ENCODE measurements at regions of chr2 and their contacts with region 1.

Region 1: GRCh38 chr2:235746257-235747084 is 252.6 kb downstream of the AGAP1 start:
- DNase-seq: peak; percentile 79
- H3K4me3 ChIP-seq: no peak overlapping the region
- H3K27ac ChIP-seq: peak overlapping the region; percentile 21
- H3K27me3 ChIP-seq: no peaks in the 10 kb centered on the region
- CTCF ChIP-seq: peak; percentile 87

Region 2: DNA sequence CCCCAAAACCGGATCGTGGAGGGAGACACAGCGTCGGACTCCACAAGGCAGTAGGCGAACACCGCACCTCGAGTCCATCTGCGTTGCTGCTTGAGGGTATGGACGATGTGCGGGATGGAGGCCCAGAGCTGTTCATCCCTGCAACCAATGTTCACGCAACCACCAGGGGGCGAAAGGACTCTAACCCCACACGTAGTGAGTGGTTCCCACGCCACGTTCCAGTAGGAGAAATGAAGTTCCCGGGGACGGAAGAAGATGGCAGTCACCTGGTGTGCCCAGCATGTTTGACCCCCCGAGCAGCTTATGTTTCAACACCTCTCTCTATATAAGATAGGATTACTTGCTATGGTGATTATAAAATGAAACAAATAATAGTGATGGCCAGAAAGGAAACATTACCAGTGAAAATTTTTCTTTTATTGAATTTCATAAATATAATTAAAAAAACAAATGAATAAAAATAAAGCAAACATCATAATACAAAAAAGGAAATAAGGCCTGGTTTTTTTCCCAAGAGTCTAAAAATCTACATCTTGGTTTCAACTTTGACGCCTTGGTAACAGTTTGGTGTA is 610.4 kb before region 1 on chr2:
- CTCF ChIA-PET with region 1: interaction called, 44 read pairs
- POLR2A ChIA-PET with region 1: no interaction called
- DNase-seq: peak; percentile 47
- H3K4me3 ChIP-seq: no peak overlapping the region
- H3K27ac ChIP-seq: no peak overlapping the region
- H3K27me3 ChIP-seq: peaks cover 27% of the 10 kb centered on the region
- CTCF ChIP-seq: peak; percentile 86

Region 3: GRCh38 chr2:235293061-235293460 is 453.4 kb before region 1 on chr2:
- CTCF ChIA-PET with region 1: no interaction called
- POLR2A ChIA-PET with region 1: no interaction called
- DNase-seq: no peak
- H3K4me3 ChIP-seq: no peak overlapping the region
- H3K27ac ChIP-seq: no peak overlapping the region
- H3K27me3 ChIP-seq: peaks cover 19% of the 10 kb centered on the region
- CTCF ChIP-seq: no peak

Region 4: DNA sequence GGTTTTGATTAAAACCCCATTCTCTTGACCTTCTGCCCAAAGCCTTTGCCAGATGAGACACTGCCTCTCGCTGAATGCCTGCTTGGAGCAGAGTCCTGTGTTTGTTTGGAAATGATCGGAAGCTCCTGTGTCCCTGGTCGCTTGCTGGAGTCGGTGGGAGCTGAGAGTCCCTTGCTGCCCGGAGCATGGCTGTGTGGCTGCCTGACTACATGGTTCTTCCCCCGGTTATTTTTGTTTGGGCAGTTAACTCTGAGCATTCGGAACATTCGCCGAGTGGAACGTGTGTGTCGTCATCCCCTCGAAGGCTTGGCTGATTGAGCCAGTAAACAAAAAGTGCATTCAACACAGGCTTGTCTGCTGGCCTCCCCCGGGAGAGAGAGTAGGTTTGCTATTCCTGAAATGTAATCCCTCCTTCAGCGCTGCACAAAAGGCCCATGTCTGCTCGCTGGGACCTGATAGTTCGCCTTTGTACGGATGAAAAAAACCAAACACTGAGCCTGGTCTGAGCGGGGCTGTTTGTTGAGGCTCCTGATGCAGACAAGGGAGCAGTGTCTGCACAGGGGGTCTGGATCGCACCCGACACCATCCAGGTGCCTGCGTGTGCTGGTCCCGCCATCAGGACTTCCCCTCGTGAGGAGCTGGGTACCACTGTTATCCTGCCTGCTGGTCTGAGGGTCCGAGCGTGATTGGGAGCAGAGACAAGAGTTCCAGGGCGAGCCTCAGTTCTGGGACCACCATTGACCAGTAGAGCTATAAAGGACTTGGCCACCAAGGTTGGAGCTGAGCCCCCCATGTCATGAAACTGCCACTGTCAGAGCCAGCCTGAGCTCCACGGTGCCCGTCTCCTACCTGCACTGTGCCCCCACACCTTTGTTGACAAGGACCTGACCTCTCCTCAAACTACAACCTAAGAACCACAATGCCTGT is 168.8 kb before region 1 on chr2:
- CTCF ChIA-PET with region 1: interaction called, 13 read pairs
- POLR2A ChIA-PET with region 1: no interaction called
- DNase-seq: peak; percentile 18
- H3K4me3 ChIP-seq: no peak overlapping the region
- H3K27ac ChIP-seq: peak overlapping the region; percentile 21
- H3K27me3 ChIP-seq: no peaks in the 10 kb centered on the region
- CTCF ChIP-seq: no peak

Region 5: DNA sequence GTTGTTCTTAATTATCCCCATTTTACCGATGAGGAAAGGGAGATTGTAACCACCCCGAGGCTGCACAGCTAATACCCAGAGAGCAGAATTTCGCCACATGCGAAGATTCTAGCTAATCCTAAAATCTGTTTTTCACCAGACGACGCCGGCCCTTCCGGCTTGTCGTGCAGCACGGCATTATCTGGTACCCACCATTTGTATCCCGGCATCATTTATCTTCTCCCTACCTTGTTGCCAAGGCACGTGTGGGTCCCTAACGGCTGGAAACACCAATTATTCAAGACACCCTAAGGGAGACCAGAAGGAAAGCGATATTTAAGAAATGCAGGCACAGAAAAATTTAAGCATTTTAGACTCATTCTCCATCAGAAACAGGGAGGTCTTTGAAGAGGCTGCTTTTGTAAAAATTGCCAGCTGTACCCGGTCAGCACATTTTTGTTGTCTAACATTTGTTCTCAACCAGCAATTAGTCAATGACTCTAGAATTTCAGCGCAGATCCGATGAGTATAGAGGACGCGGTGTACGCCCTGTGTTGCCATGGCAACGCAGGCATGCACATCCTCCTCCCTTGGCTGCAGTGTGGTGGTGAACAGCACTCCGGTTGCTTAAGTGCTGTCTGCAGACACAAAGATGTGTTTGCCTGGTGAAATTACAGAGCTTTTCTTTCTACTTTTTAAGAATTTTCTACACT is 141.0 kb before region 1 on chr2:
- CTCF ChIA-PET with region 1: interaction called, 12 read pairs
- POLR2A ChIA-PET with region 1: no interaction called
- DNase-seq: peak; percentile 84
- H3K4me3 ChIP-seq: peak overlapping the region; percentile 8; the same call in 1 of the 2 replicates
- H3K27ac ChIP-seq: peak overlapping the region; percentile 47
- H3K27me3 ChIP-seq: no peaks in the 10 kb centered on the region
- CTCF ChIP-seq: no peak

Region 6: GRCh38 chr2:235675678-235676535 is 70.6 kb before region 1 on chr2:
- CTCF ChIA-PET with region 1: interaction called, 20 read pairs
- POLR2A ChIA-PET with region 1: no interaction called
- DNase-seq: no peak
- H3K4me3 ChIP-seq: no peak overlapping the region
- H3K27ac ChIP-seq: no peak overlapping the region
- H3K27me3 ChIP-seq: no peaks in the 10 kb centered on the region
- CTCF ChIP-seq: peak; percentile 26

Region 7: GRCh38 chr2:235725016-235725489 is 21.4 kb before region 1 on chr2:
- CTCF ChIA-PET with region 1: interaction called, 24 read pairs
- POLR2A ChIA-PET with region 1: interaction called, 4 read pairs
- DNase-seq: no peak
- H3K4me3 ChIP-seq: no peak overlapping the region
- H3K27ac ChIP-seq: no peak overlapping the region
- H3K27me3 ChIP-seq: no peaks in the 10 kb centered on the region
- CTCF ChIP-seq: no peak

Region 8: GRCh38 chr2:237483040-237483721 is 1736.7 kb after region 1 on chr2:
- CTCF ChIA-PET with region 1: no interaction called
- POLR2A ChIA-PET with region 1: no interaction called
- DNase-seq: peak; percentile 64
- H3K4me3 ChIP-seq: no peak overlapping the region
- H3K27ac ChIP-seq: peak overlapping the region; percentile 71
- H3K27me3 ChIP-seq: no peaks in the 10 kb centered on the region
- CTCF ChIP-seq: peak; percentile 73